SK-N-SH (cell line): ENCODE measurements at regions of chr2 and their contacts with region 1.

Region 1: DNA sequence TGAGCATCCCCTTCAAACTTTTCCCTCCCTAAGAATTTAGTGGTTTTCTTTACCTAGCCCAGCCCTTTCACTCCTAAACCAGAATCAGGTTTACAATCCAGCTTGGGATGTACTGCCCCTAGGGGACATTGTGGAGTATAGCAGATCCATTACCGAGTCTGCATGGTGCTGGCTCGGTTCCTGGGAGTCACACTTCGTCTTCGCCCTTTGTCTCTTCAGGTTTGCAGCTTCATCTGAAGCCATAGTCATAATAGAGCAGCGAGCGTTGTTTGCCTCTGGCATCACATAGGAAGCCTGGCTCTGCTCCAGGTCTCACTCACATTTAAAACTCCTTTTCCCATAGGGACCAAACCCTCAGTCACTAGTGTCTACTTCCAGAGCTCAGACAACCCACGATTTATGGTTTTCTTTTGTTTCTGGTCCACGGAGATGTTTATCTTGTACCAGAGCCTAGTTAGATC is 16.8 kb upstream of the LYPD6 start:
- DNase-seq: peak; percentile 85
- H3K4me3 ChIP-seq: no peak overlapping the region; a peak in 2 of 4 replicates
- H3K27ac ChIP-seq: peak overlapping the region in 1 of 2 experiments; percentile 43; a peak in 1 of 4 replicates
- H3K4me1 ChIP-seq: peaks cover 0 to 9% of the 10 kb centered on the region in 2 experiments; a peak in 2 of 4 replicates
- H3K27me3 ChIP-seq: no peaks in the 10 kb centered on the region
- CTCF ChIP-seq: peak; percentile 83
- EP300 ChIP-seq: no peak
- RAD21 ChIP-seq: peak; percentile 76

Region 2: DNA sequence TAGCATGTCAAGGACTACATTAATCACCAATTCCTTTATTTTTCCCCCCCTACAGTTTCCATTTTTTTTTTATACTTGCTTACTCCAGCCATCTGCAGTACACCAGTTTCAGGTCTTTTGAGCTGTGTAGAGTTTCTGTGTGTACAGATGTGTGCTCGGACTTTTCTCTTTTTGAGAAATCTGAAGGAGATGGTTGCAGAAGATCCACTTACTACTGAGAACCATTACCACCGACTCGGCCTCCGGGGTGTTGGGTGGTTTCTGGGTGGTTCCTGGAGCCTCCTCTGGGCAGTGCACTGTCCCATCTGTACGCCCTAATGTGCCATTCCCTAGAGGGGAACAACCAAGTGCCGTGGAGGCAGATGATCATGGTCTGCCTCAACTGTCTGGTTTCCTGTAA is 290.5 kb before region 1 on chr2:
- CTCF ChIA-PET with region 1: interaction called, 46 read pairs
- POLR2A ChIA-PET with region 1: no interaction called
- DNase-seq: no peak
- H3K4me3 ChIP-seq: no peak overlapping the region
- H3K27ac ChIP-seq: no peak overlapping the region
- H3K4me1 ChIP-seq: peaks cover 0 to 2% of the 10 kb centered on the region in 2 experiments; a peak in 2 of 4 replicates
- H3K27me3 ChIP-seq: no peaks in the 10 kb centered on the region
- CTCF ChIP-seq: no peak
- EP300 ChIP-seq: no peak
- RAD21 ChIP-seq: no peak

Region 3: GRCh38 chr2:149290662-149291061 is 22.9 kb before region 1 on chr2:
- CTCF ChIA-PET with region 1: interaction called, 10 read pairs
- POLR2A ChIA-PET with region 1: no interaction called
- DNase-seq: no peak
- H3K4me3 ChIP-seq: no peak overlapping the region
- H3K27ac ChIP-seq: no peak overlapping the region
- H3K4me1 ChIP-seq: no peaks in the 10 kb centered on the region
- H3K27me3 ChIP-seq: no peaks in the 10 kb centered on the region
- CTCF ChIP-seq: no peak
- EP300 ChIP-seq: no peak
- RAD21 ChIP-seq: no peak

Region 4: GRCh38 chr2:149330126-149331022 is 16.8 kb after region 1 on chr2 and contains the start of gene LYPD6:
- CTCF ChIA-PET with region 1: interaction called, 13 read pairs
- POLR2A ChIA-PET with region 1: no interaction called
- DNase-seq: peak; percentile 96
- H3K4me3 ChIP-seq: peak within 1 kb of the TSS; percentile 94 to 97
- H3K27ac ChIP-seq: peak within 1 kb of the TSS; percentile 61 to 79; a peak in 3 of 4 replicates
- H3K4me1 ChIP-seq: peaks cover 0 to 10% of the 10 kb centered on the region in 2 experiments; a peak in 2 of 4 replicates
- H3K27me3 ChIP-seq: no peaks in the 10 kb centered on the region
- CTCF ChIP-seq: peak; percentile 32
- EP300 ChIP-seq: no peak
- RAD21 ChIP-seq: no peak
- polyA plus RNA-seq, gene LYPD6: 8.1 and 11.0 TPM in 2 replicates

Region 5: DNA sequence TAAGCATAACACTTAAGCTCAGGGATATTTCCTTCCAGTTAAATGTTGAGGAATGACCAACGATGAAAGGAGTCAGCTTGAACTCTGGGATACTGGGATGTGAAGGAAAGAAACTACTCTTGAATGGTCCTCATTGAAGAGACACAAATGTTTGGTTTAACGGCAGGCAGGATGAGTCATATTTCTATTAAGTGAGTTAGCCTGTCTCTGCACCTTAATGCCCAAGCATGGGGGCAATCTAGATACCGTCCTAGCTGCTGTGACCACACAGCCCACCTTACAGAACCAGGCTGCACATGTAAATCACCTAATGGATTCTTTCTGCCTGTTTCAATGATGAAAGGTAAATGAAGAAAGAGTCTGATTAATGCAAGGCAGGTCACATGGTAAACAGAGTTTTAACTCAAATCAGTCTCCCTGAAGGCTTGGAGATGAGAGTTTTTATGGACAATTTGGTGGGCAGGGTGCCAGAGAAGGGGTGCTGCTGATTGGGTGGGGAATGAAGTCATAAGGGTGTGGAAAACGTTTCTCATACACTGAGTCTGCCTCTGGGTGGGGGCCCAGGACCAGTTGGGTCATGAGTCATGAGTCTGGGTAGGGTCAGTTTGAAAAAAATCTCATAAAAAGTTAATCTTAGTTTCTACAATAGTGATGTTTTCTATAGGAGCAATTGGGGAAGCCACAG is 418.6 kb after region 1 on chr2:
- CTCF ChIA-PET with region 1: no interaction called
- POLR2A ChIA-PET with region 1: no interaction called
- DNase-seq: no peak
- H3K4me3 ChIP-seq: no peak overlapping the region
- H3K27ac ChIP-seq: peak overlapping the region in 1 of 2 experiments; percentile 71; a peak in 2 of 4 replicates
- H3K4me1 ChIP-seq: peaks cover 9 to 33% of the 10 kb centered on the region in 2 experiments
- H3K27me3 ChIP-seq: no peaks in the 10 kb centered on the region
- CTCF ChIP-seq: no peak
- EP300 ChIP-seq: no peak
- RAD21 ChIP-seq: no peak